OCI-LY7 (cell line): ENCODE measurements at regions of chr20 and their contacts with region 1.

Region 1: DNA sequence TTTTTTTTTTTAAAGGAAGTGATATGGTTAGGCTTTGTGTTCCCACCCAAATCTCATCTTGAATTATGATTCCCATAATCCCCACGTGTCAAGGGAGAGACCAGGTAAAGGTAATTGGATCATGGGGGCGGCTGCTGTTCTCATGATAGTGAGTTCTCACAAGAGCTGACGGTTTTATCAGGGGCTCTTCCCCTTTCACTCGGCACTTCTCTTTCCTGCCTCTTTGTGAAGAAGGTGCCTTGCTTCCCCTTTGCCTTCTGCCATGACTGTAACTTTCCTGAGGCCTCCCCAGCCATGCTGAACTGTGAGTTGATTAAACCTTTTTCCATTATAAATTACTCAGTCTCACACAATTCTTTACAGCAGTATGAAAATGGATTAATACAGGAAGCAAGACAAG is 64.3 kb downstream of the ZFP64 start:
- DNase-seq: peak; percentile 3
- H3K4me3 ChIP-seq: no peak overlapping the region
- H3K27ac ChIP-seq: no peak overlapping the region
- H3K4me1 ChIP-seq: no peaks in the 10 kb centered on the region
- CTCF ChIP-seq: no peak

Region 2: GRCh38 chr20:52219441-52219840 is 92.1 kb after region 1 on chr20:
- CTCF ChIA-PET with region 1: no interaction called
- POLR2A ChIA-PET with region 1: no interaction called
- intact Hi-C with region 1: loop called (anchors 2 kb)
- DNase-seq: peak; percentile 5
- H3K4me3 ChIP-seq: no peak overlapping the region
- H3K27ac ChIP-seq: no peak overlapping the region
- H3K4me1 ChIP-seq: no peaks in the 10 kb centered on the region
- CTCF ChIP-seq: 0 out of 2 replicates have a peak, but pooled peaks have one; percentile 16